Left lung (tissue), 14 donors: ENCODE measurements at regions of chr1 and their contacts with region 1.

Region 1: GRCh38 chr1:177069490-177069889 is 95.0 kb downstream of the ASTN1 start:
- DNase-seq: no peak
- ATAC-seq: no peak
- H3K4me3 ChIP-seq: no peak overlapping the region
- H3K27ac ChIP-seq: no peak overlapping the region
- H3K4me1 ChIP-seq: no peaks in the 10 kb centered on the region
- H3K27me3 ChIP-seq: no peaks in the 10 kb centered on the region
- CTCF ChIP-seq: no peak

Region 2: DNA sequence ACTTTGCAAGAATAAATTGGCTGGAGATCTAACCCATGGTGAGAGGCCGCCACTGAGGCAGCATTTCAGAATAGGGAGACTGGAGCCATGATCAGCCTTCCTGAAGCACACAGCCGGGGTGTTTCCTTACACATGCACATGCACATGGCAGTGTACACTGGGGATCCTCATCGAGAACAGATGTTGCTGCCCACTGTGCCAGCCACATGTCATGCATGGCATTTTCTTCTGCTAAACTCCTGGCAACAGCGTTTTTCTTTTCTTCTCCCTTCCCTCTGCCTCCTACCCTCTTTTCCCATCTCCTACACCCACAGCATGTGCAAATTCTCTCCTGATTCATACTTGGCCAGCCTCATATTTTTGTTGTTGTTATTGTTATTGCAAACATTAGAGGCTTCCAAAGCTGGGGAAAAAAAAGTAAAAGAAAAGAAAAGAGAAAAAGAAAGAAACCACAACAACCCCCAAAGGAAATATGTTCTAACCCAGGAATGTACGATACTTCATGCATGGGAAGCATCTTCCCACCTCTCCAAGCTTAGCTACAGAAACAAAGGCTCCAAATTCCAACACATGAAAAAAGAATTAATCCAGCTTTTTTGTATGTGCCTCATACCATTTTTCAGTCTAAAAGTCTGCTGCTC is 249.0 kb before region 1 on chr1:
- intact Hi-C with region 1: no loop called
- DNase-seq: no peak
- ATAC-seq: peak; percentile 17
- H3K4me3 ChIP-seq: no peak overlapping the region
- H3K27ac ChIP-seq: no peak overlapping the region
- H3K4me1 ChIP-seq: no peaks in the 10 kb centered on the region
- H3K27me3 ChIP-seq: no peaks in the 10 kb centered on the region
- CTCF ChIP-seq: no peak

Region 3: GRCh38 chr1:176847052-176847451 is 222.4 kb before region 1 on chr1:
- intact Hi-C with region 1: no loop called
- DNase-seq: no peak
- ATAC-seq: no peak
- H3K4me3 ChIP-seq: no peak overlapping the region
- H3K27ac ChIP-seq: no peak overlapping the region
- H3K4me1 ChIP-seq: no peaks in the 10 kb centered on the region
- H3K27me3 ChIP-seq: no peaks in the 10 kb centered on the region
- CTCF ChIP-seq: no peak

Region 4: GRCh38 chr1:177137814-177138213 is 68.3 kb after region 1 on chr1:
- intact Hi-C with region 1: loop called in 1 of 2 experiments (anchors 10 kb)
- DNase-seq: no peak
- ATAC-seq: no peak
- H3K4me3 ChIP-seq: no peak overlapping the region
- H3K27ac ChIP-seq: no peak overlapping the region
- H3K4me1 ChIP-seq: no peaks in the 10 kb centered on the region
- H3K27me3 ChIP-seq: no peaks in the 10 kb centered on the region
- CTCF ChIP-seq: no peak